Gastrocnemius medialis (tissue), 4 donors: ENCODE measurements at regions of chr13 and their contacts with region 1.

Region 1: GRCh38 chr13:76286178-76286577 is 600.0 kb downstream of the KCTD12 start:
- DNase-seq: no peak
- ATAC-seq: peak in 1 of 2 donors; percentile 46
- H3K4me3 ChIP-seq: no peak overlapping the region
- H3K27ac ChIP-seq: peak overlapping the region in 2 of 4 donors; percentile 21 to 26
- H3K4me1 ChIP-seq: peaks cover 0 to 5% of the 10 kb centered on the region in 2 donors
- H3K27me3 ChIP-seq: no peaks in the 10 kb centered on the region
- CTCF ChIP-seq: no peak
- POLR2A ChIP-seq: no peak

Region 2: GRCh38 chr13:76383676-76384461 is 97.7 kb after region 1 on chr13:
- in situ Hi-C with region 1: no loop called
- intact Hi-C with region 1: no loop called
- DNase-seq: peak in 1 of 2 donors; percentile 13
- ATAC-seq: peak; percentile 60 to 73
- H3K4me3 ChIP-seq: no peak overlapping the region
- H3K27ac ChIP-seq: peak overlapping the region in 3 of 4 donors; percentile 29 to 38 (median 31)
- H3K4me1 ChIP-seq: no peaks in the 10 kb centered on the region
- H3K27me3 ChIP-seq: no peaks in the 10 kb centered on the region
- CTCF ChIP-seq: no peak
- POLR2A ChIP-seq: no peak

Region 3: GRCh38 chr13:76894401-76895110 is 608.4 kb after region 1 on chr13:
- in situ Hi-C with region 1: no loop called
- intact Hi-C with region 1: loop called (anchors 10 kb)
- DNase-seq: no peak
- ATAC-seq: no peak
- H3K4me3 ChIP-seq: no peak overlapping the region
- H3K27ac ChIP-seq: no peak overlapping the region
- H3K4me1 ChIP-seq: no peaks in the 10 kb centered on the region
- H3K27me3 ChIP-seq: no peaks in the 10 kb centered on the region
- CTCF ChIP-seq: no peak
- POLR2A ChIP-seq: no peak